PC-9 (cell line): ENCODE measurements at regions of chr10 and their contacts with region 1.

Region 1: DNA sequence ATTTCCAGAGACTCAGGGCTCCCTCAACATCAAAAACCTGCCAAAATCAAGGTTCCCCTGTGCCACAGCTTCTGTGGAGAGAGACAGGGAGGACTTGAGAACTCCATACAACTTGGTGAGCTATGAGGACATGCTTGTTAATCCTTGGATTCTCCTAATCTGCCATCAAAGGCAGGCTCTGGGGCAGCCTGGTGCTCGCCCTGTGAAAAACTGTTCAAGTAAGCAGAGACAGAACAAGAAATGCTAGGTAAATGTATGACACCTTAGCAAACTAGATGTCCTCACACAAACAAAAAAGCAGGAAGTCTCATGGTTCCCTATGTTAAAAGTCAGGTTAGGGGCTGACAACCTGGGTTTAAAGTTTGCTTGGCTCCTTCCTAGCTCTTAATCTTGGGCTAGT is 73.6 kb downstream of the ANK3 start:
- DNase-seq: no peak
- H3K4me3 ChIP-seq: no peak overlapping the region
- H3K27ac ChIP-seq: no peak overlapping the region
- H3K4me1 ChIP-seq: peaks cover 29% of the 10 kb centered on the region
- H3K27me3 ChIP-seq: no peaks in the 10 kb centered on the region
- CTCF ChIP-seq: no peak

Region 2: GRCh38 chr10:59843748-59844147 is 472.3 kb before region 1 on chr10:
- CTCF ChIA-PET with region 1: no interaction called
- POLR2A ChIA-PET with region 1: interaction called, 10 read pairs
- intact Hi-C with region 1: no loop called
- DNase-seq: no peak
- H3K4me3 ChIP-seq: no peak overlapping the region
- H3K27ac ChIP-seq: no peak overlapping the region
- H3K4me1 ChIP-seq: no peaks in the 10 kb centered on the region
- H3K27me3 ChIP-seq: no peaks in the 10 kb centered on the region
- CTCF ChIP-seq: no peak